ENCODE measurements at regions of chr9 and their contacts with region 1.

Region 1: DNA sequence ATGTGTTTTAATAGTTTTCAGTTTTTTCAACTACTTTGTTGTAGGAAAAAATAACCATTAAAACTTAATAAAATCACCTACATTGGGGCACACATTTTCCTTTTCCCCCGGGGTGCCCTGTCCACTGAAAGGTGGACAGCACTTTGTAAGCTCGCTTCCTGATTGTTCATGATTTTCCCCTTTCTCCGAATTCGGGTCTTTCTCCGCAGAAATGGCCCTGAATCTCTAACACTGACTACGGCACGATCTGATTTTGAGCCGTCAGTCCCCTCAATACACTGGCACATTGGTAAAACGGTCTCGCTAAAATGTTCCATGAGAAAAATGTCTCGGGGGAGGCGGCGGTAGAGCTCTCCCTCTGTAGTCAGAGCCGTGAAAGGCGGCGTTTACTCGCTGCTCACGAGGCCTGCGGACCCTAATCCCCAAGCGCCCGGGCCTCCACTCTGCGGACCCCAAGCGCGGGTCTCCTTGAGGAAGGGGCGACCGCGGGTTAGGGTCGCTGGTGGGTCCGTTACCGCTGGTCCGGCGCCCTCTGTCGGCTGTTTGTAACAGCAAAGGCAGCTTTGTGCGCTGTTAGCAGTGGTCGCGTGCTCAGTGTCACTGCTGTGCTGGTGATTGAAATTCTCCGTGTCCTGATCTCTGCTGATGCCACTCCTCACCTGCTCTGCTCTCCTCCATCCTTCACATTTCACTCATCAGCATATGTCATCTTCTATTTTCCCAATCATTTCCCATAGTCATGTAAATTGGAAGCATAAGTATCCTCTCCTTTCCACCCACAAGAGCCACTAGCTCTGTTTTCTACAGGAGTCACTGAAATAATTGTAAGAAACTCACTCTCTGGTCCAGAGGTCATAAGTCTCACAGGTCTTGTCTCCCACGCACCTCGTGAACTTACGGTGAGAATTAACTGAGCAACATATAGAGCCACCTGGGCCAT is 10.8 kb upstream of the IFNA2 start:
- DNase-seq: peak; percentile 19 to 58 (median 49)
- H3K4me3 ChIP-seq: peak overlapping the region; percentile 37
- H3K27ac ChIP-seq: no peak overlapping the region
- H3K4me1 ChIP-seq: no peaks in the 10 kb centered on the region
- H3K27me3 ChIP-seq: no peaks in the 10 kb centered on the region
- CTCF ChIP-seq: peak in 2 of 3 donors; percentile 57 to 58
- EP300 ChIP-seq: no peak
- POLR2A ChIP-seq: no peak

Region 2: GRCh38 chr9:20532584-20532983 is 863.5 kb before region 1 on chr9:
- intact Hi-C with region 1: no loop called
- DNase-seq: no peak
- H3K4me3 ChIP-seq: no peak overlapping the region
- H3K27ac ChIP-seq: no peak overlapping the region
- H3K4me1 ChIP-seq: peaks cover 2% of the 10 kb centered on the region
- H3K27me3 ChIP-seq: no peaks in the 10 kb centered on the region
- CTCF ChIP-seq: no peak
- EP300 ChIP-seq: no peak
- POLR2A ChIP-seq: no peak

Region 3: DNA sequence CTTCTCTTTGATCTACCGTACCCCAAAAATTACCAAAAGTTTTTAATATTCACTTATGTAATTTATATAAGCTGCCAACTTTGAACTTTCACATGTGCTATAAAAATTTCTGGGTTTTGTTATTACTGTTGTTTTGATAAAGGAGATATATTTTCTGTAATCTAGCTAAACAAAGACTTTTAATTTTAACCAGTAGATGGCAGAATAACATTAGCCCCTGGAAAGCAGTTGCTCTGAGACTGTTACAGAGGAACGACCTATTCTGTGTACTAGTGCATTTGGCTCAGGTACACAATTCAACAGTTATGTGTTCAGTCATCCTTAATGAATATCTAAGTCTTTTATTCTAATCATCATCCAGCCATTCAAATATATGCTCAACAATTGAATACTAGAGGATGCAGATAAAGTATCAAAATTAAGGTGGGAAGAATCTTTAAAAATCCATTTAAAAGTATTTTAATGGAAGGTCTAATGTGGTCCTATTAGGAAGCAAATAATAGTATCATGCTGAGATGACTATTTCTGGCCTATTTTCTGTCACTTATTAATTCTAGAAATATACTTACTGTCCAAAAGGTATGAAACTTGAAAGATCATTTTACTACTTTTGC is 69.4 kb before region 1 on chr9:
- intact Hi-C with region 1: loop called in 2 of 4 experiments (anchors 5 to 10 kb)
- DNase-seq: no peak
- H3K4me3 ChIP-seq: no peak overlapping the region
- H3K27ac ChIP-seq: no peak overlapping the region
- H3K4me1 ChIP-seq: peaks cover 2% of the 10 kb centered on the region
- H3K27me3 ChIP-seq: no peaks in the 10 kb centered on the region
- CTCF ChIP-seq: peak; percentile 36 to 58 (median 39)
- EP300 ChIP-seq: no peak
- POLR2A ChIP-seq: no peak

Measured in ovary (tissue), 10 donors.